ENCODE measurements at regions of chr11 and their contacts with region 1.

Region 1: GRCh38 chr11:14537134-14537599 is 17.0 kb upstream of the PSMA1 start:
- DNase-seq: peak; percentile 77
- ATAC-seq: peak; percentile 83
- H3K4me3 ChIP-seq: peak overlapping the region in 3 of 5 experiments; percentile 8 to 58 (median 12)
- H3K4me3 Mint-ChIP-seq: peak overlapping the region; percentile 82
- H3K27ac ChIP-seq: peak overlapping the region; percentile 22 to 69
- H3K27ac Mint-ChIP-seq: no peak overlapping the region
- H3K4me1 ChIP-seq: no peaks in the 10 kb centered on the region
- H3K4me1 Mint-ChIP-seq: peaks cover 7% of the 10 kb centered on the region
- H3K27me3 ChIP-seq: no peaks in the 10 kb centered on the region
- H3K27me3 Mint-ChIP-seq: peaks cover 4% of the 10 kb centered on the region
- CTCF ChIP-seq: peak; percentile 92

Region 2: GRCh38 chr11:12755510-12756453 is 1781.4 kb before region 1 on chr11:
- CTCF ChIA-PET with region 1: no interaction called
- POLR2A ChIA-PET with region 1: no interaction called
- intact Hi-C with region 1: no loop called
- DNase-seq: no peak
- ATAC-seq: no peak
- H3K4me3 ChIP-seq: no peak overlapping the region
- H3K4me3 Mint-ChIP-seq: no peak overlapping the region
- H3K27ac ChIP-seq: no peak overlapping the region
- H3K27ac Mint-ChIP-seq: no peak overlapping the region
- H3K4me1 ChIP-seq: no peaks in the 10 kb centered on the region
- H3K4me1 Mint-ChIP-seq: no peaks in the 10 kb centered on the region
- H3K27me3 ChIP-seq: no peaks in the 10 kb centered on the region
- H3K27me3 Mint-ChIP-seq: peaks cover 9% of the 10 kb centered on the region
- CTCF ChIP-seq: no peak

Region 3: GRCh38 chr11:14513800-14514199 is 23.4 kb before region 1 on chr11:
- CTCF ChIA-PET with region 1: no interaction called
- POLR2A ChIA-PET with region 1: no interaction called
- intact Hi-C with region 1: no loop called
- DNase-seq: no peak
- ATAC-seq: no peak
- H3K4me3 ChIP-seq: no peak overlapping the region
- H3K4me3 Mint-ChIP-seq: no peak overlapping the region
- H3K27ac ChIP-seq: no peak overlapping the region
- H3K27ac Mint-ChIP-seq: no peak overlapping the region
- H3K4me1 ChIP-seq: peaks cover 0 to 5% of the 10 kb centered on the region in 2 donors
- H3K4me1 Mint-ChIP-seq: peaks cover 5% of the 10 kb centered on the region
- H3K27me3 ChIP-seq: no peaks in the 10 kb centered on the region
- H3K27me3 Mint-ChIP-seq: no peaks in the 10 kb centered on the region
- CTCF ChIP-seq: no peak

Region 4: DNA sequence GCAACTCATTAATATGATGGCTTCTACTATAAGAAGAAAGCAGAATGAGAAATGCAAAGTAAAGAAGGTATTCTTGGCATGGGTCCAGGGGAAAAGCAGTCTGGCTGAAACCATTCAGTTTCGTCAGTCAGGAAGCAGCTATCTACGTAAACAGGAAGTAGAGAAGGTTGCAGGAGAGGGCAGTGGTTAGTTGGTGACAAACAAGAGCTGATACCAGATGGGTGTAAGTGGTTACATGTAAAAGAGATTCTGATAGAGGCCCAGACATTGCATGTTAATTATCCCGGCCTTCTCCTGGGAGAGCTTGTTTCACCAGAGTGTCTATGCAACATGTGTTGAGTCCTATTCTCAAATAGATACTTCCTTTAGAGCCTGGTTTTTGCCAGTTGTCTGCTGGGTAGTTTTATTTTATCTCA is 41.4 kb after region 1 on chr11:
- CTCF ChIA-PET with region 1: interaction called, 6 read pairs
- POLR2A ChIA-PET with region 1: no interaction called
- intact Hi-C with region 1: loop called (anchors 5 kb)
- DNase-seq: peak; percentile 90
- ATAC-seq: peak; percentile 99
- H3K4me3 ChIP-seq: peak overlapping the region in 1 of 5 experiments; percentile 18
- H3K4me3 Mint-ChIP-seq: peak overlapping the region; percentile 51
- H3K27ac ChIP-seq: peak overlapping the region; percentile 59 to 71
- H3K27ac Mint-ChIP-seq: peak overlapping the region; percentile 85
- H3K4me1 ChIP-seq: peaks cover 13 to 22% of the 10 kb centered on the region in 2 donors
- H3K4me1 Mint-ChIP-seq: peaks cover 37% of the 10 kb centered on the region
- H3K27me3 ChIP-seq: no peaks in the 10 kb centered on the region
- H3K27me3 Mint-ChIP-seq: peaks cover 4% of the 10 kb centered on the region
- CTCF ChIP-seq: no peak

Region 5: DNA sequence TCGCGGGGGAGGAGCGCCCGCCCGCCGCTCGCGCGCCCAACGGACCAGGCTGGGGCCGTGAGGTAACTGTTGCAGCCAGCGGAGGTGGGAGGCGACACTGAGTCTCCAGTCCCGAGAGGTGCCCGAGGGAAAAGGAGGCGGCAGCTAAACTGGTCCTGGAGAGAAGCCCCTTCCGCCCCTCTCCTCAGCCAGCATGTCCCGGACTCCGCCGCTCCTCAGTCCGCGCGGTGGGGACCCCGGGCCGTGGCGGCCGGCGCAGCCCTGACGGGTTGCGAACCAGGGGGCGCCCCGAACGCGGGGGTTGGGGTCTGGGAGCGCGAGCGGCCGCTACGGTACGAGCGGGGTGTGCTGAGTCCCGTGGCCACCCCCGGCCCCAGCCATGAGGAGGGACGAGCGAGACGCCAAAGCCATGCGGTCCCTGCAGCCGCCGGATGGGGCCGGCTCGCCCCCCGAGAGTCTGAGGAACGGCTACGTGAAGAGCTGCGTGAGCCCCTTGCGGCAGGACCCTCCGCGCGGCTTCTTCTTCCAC is 106.6 kb after region 1 on chr11 and contains the start of gene PDE3B:
- CTCF ChIA-PET with region 1: interaction called, 31 read pairs
- POLR2A ChIA-PET with region 1: interaction called, 8 read pairs
- intact Hi-C with region 1: loop called (anchors 1 kb)
- DNase-seq: peak; percentile 72
- ATAC-seq: peak; percentile 74
- H3K4me3 ChIP-seq: peak within 1 kb of the TSS; percentile 58 to 92 (median 73)
- H3K4me3 Mint-ChIP-seq: peak within 1 kb of the TSS; percentile 92
- H3K27ac ChIP-seq: peak within 1 kb of the TSS in 1 of 2 donors; percentile 38
- H3K27ac Mint-ChIP-seq: peak within 1 kb of the TSS; percentile 64
- H3K4me1 ChIP-seq: peaks cover 7 to 17% of the 10 kb centered on the region in 2 donors
- H3K4me1 Mint-ChIP-seq: peaks cover 9% of the 10 kb centered on the region
- H3K27me3 ChIP-seq: peaks cover 0 to 29% (median 14%) of the 10 kb centered on the region in 4 experiments
- H3K27me3 Mint-ChIP-seq: peaks cover 40% of the 10 kb centered on the region
- CTCF ChIP-seq: peak; percentile 3
- total RNA-seq, gene PDE3B: 60.7 and 70.7 TPM in 2 replicates

Region 6: GRCh38 chr11:14764579-14765527 is 227.7 kb after region 1 on chr11:
- CTCF ChIA-PET with region 1: interaction called, 5 read pairs
- POLR2A ChIA-PET with region 1: no interaction called
- intact Hi-C with region 1: loop called (anchors 5 kb)
- DNase-seq: peak; percentile 81
- ATAC-seq: peak; percentile 88
- H3K4me3 ChIP-seq: peak overlapping the region in 1 of 5 experiments; percentile 0
- H3K4me3 Mint-ChIP-seq: peak overlapping the region; percentile 30
- H3K27ac ChIP-seq: peak overlapping the region; percentile 1 to 8
- H3K27ac Mint-ChIP-seq: peak overlapping the region; percentile 7
- H3K4me1 ChIP-seq: peaks cover 17 to 25% of the 10 kb centered on the region in 2 donors
- H3K4me1 Mint-ChIP-seq: peaks cover 18% of the 10 kb centered on the region
- H3K27me3 ChIP-seq: peaks cover 0 to 6% (median 5%) of the 10 kb centered on the region in 4 experiments
- H3K27me3 Mint-ChIP-seq: no peaks in the 10 kb centered on the region
- CTCF ChIP-seq: no peak

Region 7: GRCh38 chr11:15006139-15006759 is 469.1 kb after region 1 on chr11:
- CTCF ChIA-PET with region 1: interaction called, 5 read pairs
- POLR2A ChIA-PET with region 1: no interaction called
- intact Hi-C with region 1: loop called (anchors 5 kb)
- DNase-seq: peak; percentile 55
- ATAC-seq: no peak
- H3K4me3 ChIP-seq: no peak overlapping the region
- H3K4me3 Mint-ChIP-seq: no peak overlapping the region
- H3K27ac ChIP-seq: no peak overlapping the region
- H3K27ac Mint-ChIP-seq: no peak overlapping the region
- H3K4me1 ChIP-seq: no peaks in the 10 kb centered on the region
- H3K4me1 Mint-ChIP-seq: no peaks in the 10 kb centered on the region
- H3K27me3 ChIP-seq: peaks cover 0 to 19% (median 0%) of the 10 kb centered on the region in 4 experiments
- H3K27me3 Mint-ChIP-seq: peaks cover 57% of the 10 kb centered on the region
- CTCF ChIP-seq: peak; percentile 75

Region 8: DNA sequence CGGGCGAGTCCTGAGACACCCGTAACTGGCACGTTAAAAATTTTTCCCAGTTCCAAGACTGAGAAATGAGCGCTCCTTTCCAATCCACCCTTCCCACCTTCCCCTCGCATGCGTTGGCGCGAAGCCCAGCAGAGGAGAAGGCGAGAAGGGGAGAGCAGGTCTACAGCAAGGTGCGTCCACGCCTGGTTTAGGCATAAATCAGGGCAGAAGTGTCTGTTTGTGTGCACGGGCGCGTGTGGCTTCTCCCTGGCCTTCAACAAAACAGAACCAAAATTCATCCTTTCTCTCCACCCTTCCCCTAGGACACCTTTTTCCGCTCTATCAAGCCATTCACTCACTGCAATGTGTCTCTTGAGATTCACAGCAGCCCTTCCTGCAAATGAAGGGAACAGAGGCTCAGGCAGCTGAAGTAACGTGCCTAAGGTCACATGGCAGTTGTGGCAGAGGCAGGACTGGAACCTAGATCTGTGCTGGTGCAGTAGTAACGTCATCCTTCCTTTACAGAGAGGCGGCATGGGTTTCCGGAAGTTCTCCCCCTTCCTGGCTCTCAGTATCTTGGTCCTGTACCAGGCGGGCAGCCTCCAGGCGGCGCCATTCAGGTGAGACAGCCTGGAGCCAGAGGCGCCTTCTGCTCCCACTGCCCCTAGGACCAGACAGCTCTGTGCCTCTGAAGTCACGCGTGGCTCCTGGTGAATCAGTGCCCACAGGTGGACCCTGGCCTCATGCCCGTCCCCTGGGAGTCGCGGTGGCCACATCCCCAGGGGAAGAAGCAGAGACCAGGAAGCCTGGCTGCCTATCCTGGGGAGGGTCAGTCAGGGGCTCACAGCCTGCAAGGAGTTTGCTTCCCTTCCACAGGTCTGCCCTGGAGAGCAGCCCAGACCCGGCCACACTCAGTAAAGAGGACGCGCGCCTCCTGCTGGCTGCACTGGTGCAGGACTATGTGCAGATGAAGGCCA is 537.3 kb after region 1 on chr11:
- CTCF ChIA-PET with region 1: interaction called, 5 read pairs
- POLR2A ChIA-PET with region 1: no interaction called
- intact Hi-C with region 1: loop called (anchors 5 kb)
- DNase-seq: peak; percentile 78
- ATAC-seq: peak; percentile 82
- H3K4me3 ChIP-seq: peak overlapping the region in 4 of 5 experiments; percentile 20 to 51 (median 28)
- H3K4me3 Mint-ChIP-seq: peak overlapping the region; percentile 75
- H3K27ac ChIP-seq: no peak overlapping the region
- H3K27ac Mint-ChIP-seq: peak overlapping the region; percentile 41
- H3K4me1 ChIP-seq: peaks cover 19% of the 10 kb centered on the region in 2 donors
- H3K4me1 Mint-ChIP-seq: peaks cover 17% of the 10 kb centered on the region
- H3K27me3 ChIP-seq: peaks cover 0 to 52% (median 16%) of the 10 kb centered on the region in 4 experiments
- H3K27me3 Mint-ChIP-seq: peaks cover 60% of the 10 kb centered on the region
- CTCF ChIP-seq: peak; percentile 75

Region 9: GRCh38 chr11:15208378-15209222 is 671.4 kb after region 1 on chr11:
- CTCF ChIA-PET with region 1: no interaction called
- POLR2A ChIA-PET with region 1: no interaction called
- intact Hi-C with region 1: loop called (anchors 2 kb)
- DNase-seq: peak; percentile 81
- ATAC-seq: peak; percentile 92
- H3K4me3 ChIP-seq: no peak overlapping the region
- H3K4me3 Mint-ChIP-seq: no peak overlapping the region
- H3K27ac ChIP-seq: no peak overlapping the region
- H3K27ac Mint-ChIP-seq: no peak overlapping the region
- H3K4me1 ChIP-seq: no peaks in the 10 kb centered on the region
- H3K4me1 Mint-ChIP-seq: no peaks in the 10 kb centered on the region
- H3K27me3 ChIP-seq: peaks cover 0 to 17% (median 0%) of the 10 kb centered on the region in 4 experiments
- H3K27me3 Mint-ChIP-seq: peaks cover 19% of the 10 kb centered on the region
- CTCF ChIP-seq: peak; percentile 89